ENCODE measurements at regions of chr2 and their contacts with region 1.

Region 1: GRCh38 chr2:201396595-201396994 is 39.5 kb upstream of the FLACC1 start:
- DNase-seq: no peak
- ATAC-seq: no peak
- H3K4me3 ChIP-seq: no peak overlapping the region
- H3K27ac ChIP-seq: no peak overlapping the region
- H3K4me1 ChIP-seq: no peaks in the 10 kb centered on the region
- H3K27me3 ChIP-seq: no peaks in the 10 kb centered on the region

Region 2: GRCh38 chr2:201470821-201471731 is 74.5 kb after region 1 on chr2:
- intact Hi-C with region 1: loop called in 1 of 4 experiments (anchors 5 kb)
- DNase-seq: no peak
- ATAC-seq: no peak
- H3K4me3 ChIP-seq: no peak overlapping the region
- H3K27ac ChIP-seq: no peak overlapping the region
- H3K4me1 ChIP-seq: no peaks in the 10 kb centered on the region
- H3K27me3 ChIP-seq: no peaks in the 10 kb centered on the region

Region 3: GRCh38 chr2:201715483-201715882 is 318.9 kb after region 1 on chr2:
- intact Hi-C with region 1: loop called in 1 of 4 experiments (anchors 10 kb)
- DNase-seq: no peak
- ATAC-seq: no peak
- H3K4me3 ChIP-seq: no peak overlapping the region
- H3K27ac ChIP-seq: no peak overlapping the region
- H3K4me1 ChIP-seq: no peaks in the 10 kb centered on the region
- H3K27me3 ChIP-seq: no peaks in the 10 kb centered on the region

Region 4: DNA sequence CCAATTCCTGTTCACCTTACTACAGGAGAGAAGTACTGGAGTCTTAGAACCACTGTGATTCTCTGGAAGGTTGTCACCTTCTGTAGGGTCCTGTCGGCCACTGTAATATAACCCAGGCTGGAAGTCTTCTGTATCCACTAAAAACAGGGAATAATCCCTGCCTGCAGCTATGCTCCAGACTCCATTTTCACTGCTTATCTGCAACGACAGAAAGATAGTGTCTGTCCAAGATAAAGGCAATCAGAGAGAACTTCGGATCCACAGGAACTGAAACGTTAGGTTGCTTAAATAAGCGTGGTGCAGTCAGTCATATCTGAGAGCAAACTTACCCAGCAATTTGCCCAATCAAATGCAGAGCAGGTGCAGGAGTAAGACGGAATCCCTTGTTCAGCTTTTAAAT is 350.0 kb after region 1 on chr2:
- intact Hi-C with region 1: loop called in 1 of 4 experiments (anchors 10 kb)
- DNase-seq: no peak
- ATAC-seq: no peak
- H3K4me3 ChIP-seq: no peak overlapping the region
- H3K27ac ChIP-seq: no peak overlapping the region
- H3K4me1 ChIP-seq: no peaks in the 10 kb centered on the region
- H3K27me3 ChIP-seq: no peaks in the 10 kb centered on the region